IMR-90 (cell line): ENCODE measurements at regions of chr5 and their contacts with region 1.

Region 1: DNA sequence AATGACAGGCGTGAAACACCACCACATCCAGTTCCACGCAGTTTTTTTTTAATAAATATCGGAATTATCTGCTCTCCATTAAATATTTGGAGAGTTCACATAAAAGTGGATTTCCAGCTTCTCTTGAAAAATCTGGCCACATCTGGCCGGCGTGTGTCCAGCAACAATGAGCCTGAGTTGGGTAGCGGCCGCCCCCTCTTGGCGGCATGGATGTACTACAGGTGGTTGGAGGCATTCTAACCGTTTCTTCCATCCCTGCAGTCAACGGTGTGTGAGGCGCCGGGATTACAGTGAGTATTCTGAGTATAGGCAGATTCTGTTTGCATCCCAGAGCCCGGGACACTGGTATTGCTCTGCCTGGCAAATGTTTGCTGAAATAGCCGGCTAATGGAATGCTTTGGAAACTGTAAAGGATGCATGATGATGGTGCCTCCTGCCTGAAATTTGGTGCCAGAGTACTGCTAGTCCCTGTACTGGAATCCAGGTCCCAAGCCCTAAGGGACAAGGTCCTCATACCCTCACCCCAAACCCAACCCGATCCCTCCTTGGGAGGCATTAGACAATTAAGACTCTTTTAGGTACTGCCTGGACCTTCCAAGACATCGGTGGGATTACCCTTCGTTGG is 13.6 kb upstream of the GM2A start:
- DNase-seq: peak; percentile 63
- ATAC-seq: peak; percentile 99
- H3K4me3 ChIP-seq: no peak overlapping the region
- H3K27ac ChIP-seq: no peak overlapping the region
- H3K4me1 ChIP-seq: peaks cover 2% of the 10 kb centered on the region; the same call in 1 of the 2 replicates
- H3K27me3 ChIP-seq: peaks cover 18% of the 10 kb centered on the region
- CTCF ChIP-seq: peak; percentile 93
- POLR2A ChIP-seq: no peak
- RAD21 ChIP-seq: peak; percentile 81

Region 2: GRCh38 chr5:151002250-151002649 is 237.1 kb before region 1 on chr5:
- CTCF ChIA-PET with region 1: no interaction called
- POLR2A ChIA-PET with region 1: no interaction called
- dilution Hi-C with region 1: no loop called
- in situ Hi-C with region 1: no loop called
- intact Hi-C with region 1: loop called (anchors 1 kb)
- DNase-seq: peak; percentile 41
- ATAC-seq: peak; percentile 46
- H3K4me3 ChIP-seq: no peak overlapping the region
- H3K27ac ChIP-seq: no peak overlapping the region
- H3K4me1 ChIP-seq: peaks cover 12% of the 10 kb centered on the region; the same call in 1 of the 2 replicates
- H3K27me3 ChIP-seq: peaks cover 11% of the 10 kb centered on the region
- CTCF ChIP-seq: peak; percentile 64
- POLR2A ChIP-seq: no peak
- RAD21 ChIP-seq: peak; percentile 72

Region 3: DNA sequence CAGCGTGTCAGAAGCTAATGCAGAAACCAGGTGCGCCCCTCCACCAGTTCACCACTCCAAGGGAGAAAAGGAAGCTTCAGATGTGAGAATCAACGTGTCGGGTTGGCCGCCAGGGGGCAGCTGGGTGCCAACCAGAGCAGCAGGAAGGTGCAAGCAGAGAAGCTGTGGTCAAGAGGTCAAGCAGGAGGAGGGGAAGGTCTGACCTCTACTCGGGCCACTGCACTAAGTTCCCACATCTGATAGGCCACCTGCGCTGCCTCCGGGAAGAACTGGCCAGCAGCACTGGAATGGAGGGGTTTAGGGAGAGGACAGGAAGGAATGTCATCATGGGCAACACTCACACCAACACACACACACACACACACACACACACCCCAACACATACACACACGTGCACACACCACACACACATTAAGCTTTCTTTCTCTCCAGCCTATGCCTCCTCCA is 113.1 kb before region 1 on chr5:
- CTCF ChIA-PET with region 1: interaction called, 3 read pairs
- POLR2A ChIA-PET with region 1: no interaction called
- dilution Hi-C with region 1: no loop called
- in situ Hi-C with region 1: loop called (anchors 5 kb)
- intact Hi-C with region 1: loop called (anchors 1 kb)
- DNase-seq: peak; percentile 51
- ATAC-seq: peak; percentile 79
- H3K4me3 ChIP-seq: no peak overlapping the region
- H3K27ac ChIP-seq: no peak overlapping the region
- H3K4me1 ChIP-seq: peaks cover 2% of the 10 kb centered on the region; the same call in 1 of the 2 replicates
- H3K27me3 ChIP-seq: no peaks in the 10 kb centered on the region
- CTCF ChIP-seq: peak; percentile 63
- POLR2A ChIP-seq: no peak
- RAD21 ChIP-seq: peak; percentile 63

Region 4: GRCh38 chr5:151141535-151141934 is 97.8 kb before region 1 on chr5:
- CTCF ChIA-PET with region 1: no interaction called
- POLR2A ChIA-PET with region 1: no interaction called
- dilution Hi-C with region 1: no loop called
- in situ Hi-C with region 1: no loop called
- intact Hi-C with region 1: no loop called
- DNase-seq: peak; percentile 25
- ATAC-seq: no peak; the same call in none of the 2 replicates
- H3K4me3 ChIP-seq: no peak overlapping the region
- H3K27ac ChIP-seq: no peak overlapping the region
- H3K4me1 ChIP-seq: peaks cover 2% of the 10 kb centered on the region; the same call in 1 of the 2 replicates
- H3K27me3 ChIP-seq: no peaks in the 10 kb centered on the region
- CTCF ChIP-seq: no peak
- POLR2A ChIP-seq: no peak
- RAD21 ChIP-seq: no peak

Region 5: DNA sequence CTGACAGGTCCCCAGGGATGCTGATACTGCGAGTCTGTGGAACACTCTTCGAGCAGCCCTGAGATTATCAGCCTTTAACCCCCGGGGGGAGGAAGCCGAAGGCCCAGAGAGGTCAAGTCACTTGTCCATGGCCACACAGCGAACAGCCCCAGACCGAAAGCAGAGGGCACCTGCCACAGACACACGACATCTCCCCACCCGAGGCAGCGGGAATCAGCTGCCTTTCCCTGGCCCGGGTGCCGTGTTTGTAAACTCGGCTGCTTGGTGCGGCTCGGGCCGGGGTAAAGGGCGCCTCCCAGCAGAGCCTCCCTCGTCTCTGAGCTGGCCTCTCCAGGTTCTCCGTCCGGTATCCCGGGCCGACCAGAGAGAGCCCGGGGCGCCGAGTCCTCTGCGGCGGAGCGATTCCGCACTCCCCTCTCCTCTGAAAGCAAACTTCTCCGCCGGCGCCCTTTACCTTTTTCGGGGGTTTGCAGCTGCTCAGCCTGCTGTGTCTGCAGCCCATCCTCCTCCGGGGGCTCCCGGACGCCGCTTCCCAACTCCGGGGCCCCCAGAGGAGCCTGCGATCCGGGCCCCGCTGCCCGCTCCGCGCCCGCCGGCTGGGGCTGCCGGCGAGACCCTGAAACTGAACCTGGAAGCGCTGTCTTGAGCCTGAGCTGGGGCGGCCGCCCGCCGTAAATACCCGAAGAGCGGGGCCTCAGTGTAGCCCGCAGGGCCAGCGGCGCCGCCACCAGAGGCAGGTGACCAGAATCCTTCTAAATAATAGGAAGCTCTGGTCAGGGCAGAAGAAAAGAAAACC is 15.7 kb before region 1 on chr5 and contains the start of gene CCDC69:
- CTCF ChIA-PET with region 1: interaction called, 10 read pairs
- POLR2A ChIA-PET with region 1: no interaction called
- dilution Hi-C with region 1: no loop called
- in situ Hi-C with region 1: no loop called
- intact Hi-C with region 1: loop called (anchors 1 kb)
- DNase-seq: peak; percentile 57
- ATAC-seq: peak; percentile 93
- H3K4me3 ChIP-seq: peak within 1 kb of the TSS; percentile 55
- H3K27ac ChIP-seq: no peak within 1 kb of the TSS
- H3K4me1 ChIP-seq: peaks cover 5% of the 10 kb centered on the region
- H3K27me3 ChIP-seq: peaks cover 6% of the 10 kb centered on the region
- CTCF ChIP-seq: no peak; the same call in 1 of the 2 replicates
- POLR2A ChIP-seq: no peak
- RAD21 ChIP-seq: no peak
- total RNA-seq, gene CCDC69: 0.36 and 0.56 TPM in 2 replicates

Region 6: GRCh38 chr5:151651997-151652645 is 412.8 kb after region 1 on chr5:
- CTCF ChIA-PET with region 1: interaction called, 3 read pairs
- POLR2A ChIA-PET with region 1: no interaction called
- dilution Hi-C with region 1: no loop called
- in situ Hi-C with region 1: no loop called
- intact Hi-C with region 1: loop called (anchors 5 kb)
- DNase-seq: peak; percentile 75
- ATAC-seq: peak; percentile 100
- H3K4me3 ChIP-seq: no peak overlapping the region
- H3K27ac ChIP-seq: no peak overlapping the region
- H3K4me1 ChIP-seq: peaks cover 2% of the 10 kb centered on the region; the same call in 1 of the 2 replicates
- H3K27me3 ChIP-seq: peaks cover 7% of the 10 kb centered on the region; the same call in 1 of the 2 replicates
- CTCF ChIP-seq: peak; percentile 98
- POLR2A ChIP-seq: no peak
- RAD21 ChIP-seq: peak; percentile 94